Left lung (tissue), 14 donors: ENCODE measurements at regions of chr6 and their contacts with region 1.

Region 1: DNA sequence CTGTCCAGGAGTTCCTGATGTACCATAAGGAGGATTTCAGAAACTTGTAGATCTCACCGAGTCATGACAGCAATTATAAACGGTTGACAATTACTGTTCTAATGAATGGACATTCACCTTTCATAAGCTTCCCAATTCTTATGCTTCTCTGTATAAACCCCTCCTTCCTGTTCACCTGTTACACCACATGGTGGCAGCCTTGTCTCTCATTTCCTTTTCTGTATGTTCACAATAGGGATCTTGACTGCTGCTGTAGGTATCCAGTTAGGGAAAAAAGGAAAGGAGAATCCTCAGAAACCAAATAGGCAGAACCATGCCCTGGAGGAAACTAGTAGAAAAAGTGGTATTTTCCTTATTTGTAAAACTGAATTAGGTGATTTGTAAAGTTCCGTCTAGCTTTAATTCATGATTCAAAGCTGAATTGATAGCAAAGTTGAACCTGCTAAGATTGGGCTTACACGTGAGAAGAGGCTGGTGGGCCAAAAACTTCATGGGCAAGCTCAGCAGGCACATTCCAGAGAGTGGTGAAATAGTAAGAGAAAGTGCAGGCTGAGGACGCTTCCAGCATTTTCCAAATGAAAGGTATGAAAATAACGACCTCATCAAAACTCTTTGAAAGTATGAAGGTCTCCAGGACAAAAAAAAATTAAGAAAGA is 29.0 kb upstream of the TBPL1 start:
- DNase-seq: peak in 2 of 4 donors; percentile 72 to 84
- ATAC-seq: peak; percentile 97
- H3K4me3 ChIP-seq: no peak overlapping the region
- H3K27ac ChIP-seq: no peak overlapping the region
- H3K4me1 ChIP-seq: no peaks in the 10 kb centered on the region
- H3K27me3 ChIP-seq: peaks cover 0 to 16% of the 10 kb centered on the region in 2 donors
- CTCF ChIP-seq: peak; percentile 76 to 85

Region 2: GRCh38 chr6:134063966-134064445 is 139.9 kb after region 1 on chr6:
- intact Hi-C with region 1: loop called in 1 of 2 experiments (anchors 10 kb)
- DNase-seq: peak in 2 of 4 donors; percentile 59 to 77
- ATAC-seq: peak; percentile 98
- H3K4me3 ChIP-seq: no peak overlapping the region
- H3K27ac ChIP-seq: no peak overlapping the region
- H3K4me1 ChIP-seq: peaks cover 3 to 4% of the 10 kb centered on the region in 2 donors
- H3K27me3 ChIP-seq: no peaks in the 10 kb centered on the region
- CTCF ChIP-seq: peak; percentile 68 to 78

Region 3: GRCh38 chr6:134097114-134097707 is 173.1 kb after region 1 on chr6:
- intact Hi-C with region 1: loop called in 1 of 2 experiments (anchors 2 kb)
- DNase-seq: peak in 2 of 4 donors; percentile 77 to 87
- ATAC-seq: peak; percentile 76
- H3K4me3 ChIP-seq: no peak overlapping the region
- H3K27ac ChIP-seq: no peak overlapping the region
- H3K4me1 ChIP-seq: no peaks in the 10 kb centered on the region
- H3K27me3 ChIP-seq: peaks cover 0 to 4% of the 10 kb centered on the region in 2 donors
- CTCF ChIP-seq: peak; percentile 60 to 64

Region 4: DNA sequence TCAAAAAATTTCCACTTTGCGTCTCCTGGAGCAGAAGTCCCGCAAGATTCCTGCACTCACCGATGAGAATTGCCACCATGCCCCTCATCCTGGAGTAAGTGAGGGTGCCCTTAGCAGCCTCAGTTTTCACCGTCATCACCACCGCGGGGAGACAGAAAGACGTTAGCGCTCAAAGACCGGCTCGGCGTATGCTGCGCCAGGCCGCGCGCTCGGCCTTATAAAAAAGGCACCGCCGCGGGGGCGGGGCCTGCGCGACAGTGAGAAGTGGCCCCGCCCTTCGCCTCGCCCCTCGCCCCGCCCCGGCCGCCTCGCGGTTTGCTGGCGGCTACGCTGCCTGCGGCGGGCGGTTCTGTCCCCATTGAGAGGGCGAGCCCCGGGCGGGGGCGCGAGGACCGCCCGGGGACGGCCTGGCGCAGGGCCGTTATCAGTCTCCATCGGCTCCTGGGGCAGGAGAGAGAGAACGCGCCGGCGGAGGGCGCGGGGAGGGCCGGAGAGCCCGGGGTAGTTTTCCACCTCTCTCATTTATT is 250.7 kb after region 1 on chr6:
- intact Hi-C with region 1: no loop called
- DNase-seq: peak; percentile 86 to 99 (median 94)
- ATAC-seq: peak; percentile 89
- H3K4me3 ChIP-seq: peak overlapping the region; percentile 69 to 76
- H3K27ac ChIP-seq: peak overlapping the region; percentile 99 to 100
- H3K4me1 ChIP-seq: peaks cover 3 to 71% of the 10 kb centered on the region in 2 donors
- H3K27me3 ChIP-seq: no peaks in the 10 kb centered on the region
- CTCF ChIP-seq: no peak